A549 (cell line): ENCODE measurements at regions of chr1 and their contacts with region 1.

Region 1: DNA sequence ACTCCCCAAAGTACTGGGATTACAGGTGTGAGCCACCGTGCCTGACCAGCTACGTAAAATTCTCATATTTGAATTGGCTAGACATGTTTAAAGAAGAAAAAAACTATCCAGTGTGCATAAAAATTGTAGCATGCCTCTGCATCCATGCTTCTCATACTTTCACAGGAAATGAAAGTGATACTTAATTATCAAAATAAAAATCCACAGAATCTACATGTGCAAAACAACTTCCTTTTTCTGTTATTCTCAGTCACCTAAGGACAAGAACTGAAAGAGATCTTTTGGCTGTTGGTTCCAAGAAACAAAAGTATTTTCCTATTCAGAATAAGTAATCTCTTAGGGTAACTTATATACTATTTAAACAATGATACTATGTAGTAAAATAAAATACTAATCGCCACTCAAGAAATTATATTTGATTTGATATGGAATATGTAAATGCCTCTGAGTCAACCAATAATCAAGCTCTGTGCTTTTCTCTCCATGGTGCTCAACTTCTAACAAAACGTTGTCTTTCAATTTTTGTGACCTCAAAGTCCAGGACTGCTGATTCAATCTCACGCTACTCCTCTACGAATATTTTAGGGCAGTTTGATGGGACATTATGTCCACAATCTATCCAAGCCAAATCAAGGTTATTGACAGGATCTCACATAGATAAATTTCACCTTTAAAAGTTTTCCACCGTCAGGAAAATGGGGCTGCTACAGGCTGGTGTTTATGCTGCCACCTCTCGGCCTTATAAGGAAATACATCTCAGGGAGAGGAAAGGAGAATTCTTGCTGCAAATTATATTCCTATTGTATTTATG is 102.7 kb downstream of the ZNF281 start:
- DNase-seq: peak; percentile 47 to 76
- ATAC-seq: no peak
- H3K4me3 ChIP-seq: no peak overlapping the region
- H3K27ac ChIP-seq: peak overlapping the region; percentile 16 to 45; a peak in 1 of 6 replicates
- H3K4me1 ChIP-seq: peaks cover 8% of the 10 kb centered on the region; the same call in 1 of the 3 replicates
- CTCF ChIP-seq: peak; percentile 83
- EP300 ChIP-seq: no peak
- POLR2A ChIP-seq: no peak
- RAD21 ChIP-seq: peak; percentile 67 to 74; a peak in 4 of 5 replicates

Region 2: GRCh38 chr1:200296091-200296661 is 11.0 kb before region 1 on chr1:
- CTCF ChIA-PET with region 1: interaction called, 20 read pairs
- POLR2A ChIA-PET with region 1: no interaction called
- DNase-seq: peak in 1 of 2 experiments; percentile 32
- ATAC-seq: peak in 1 of 2 experiments; percentile 74; a peak in 3 of 6 replicates
- H3K4me3 ChIP-seq: no peak overlapping the region
- H3K27ac ChIP-seq: peak overlapping the region in 1 of 2 experiments; percentile 15; a peak in 1 of 6 replicates
- H3K4me1 ChIP-seq: peaks cover 10% of the 10 kb centered on the region
- CTCF ChIP-seq: no peak
- EP300 ChIP-seq: no peak
- POLR2A ChIP-seq: no peak
- RAD21 ChIP-seq: no peak

Region 3: DNA sequence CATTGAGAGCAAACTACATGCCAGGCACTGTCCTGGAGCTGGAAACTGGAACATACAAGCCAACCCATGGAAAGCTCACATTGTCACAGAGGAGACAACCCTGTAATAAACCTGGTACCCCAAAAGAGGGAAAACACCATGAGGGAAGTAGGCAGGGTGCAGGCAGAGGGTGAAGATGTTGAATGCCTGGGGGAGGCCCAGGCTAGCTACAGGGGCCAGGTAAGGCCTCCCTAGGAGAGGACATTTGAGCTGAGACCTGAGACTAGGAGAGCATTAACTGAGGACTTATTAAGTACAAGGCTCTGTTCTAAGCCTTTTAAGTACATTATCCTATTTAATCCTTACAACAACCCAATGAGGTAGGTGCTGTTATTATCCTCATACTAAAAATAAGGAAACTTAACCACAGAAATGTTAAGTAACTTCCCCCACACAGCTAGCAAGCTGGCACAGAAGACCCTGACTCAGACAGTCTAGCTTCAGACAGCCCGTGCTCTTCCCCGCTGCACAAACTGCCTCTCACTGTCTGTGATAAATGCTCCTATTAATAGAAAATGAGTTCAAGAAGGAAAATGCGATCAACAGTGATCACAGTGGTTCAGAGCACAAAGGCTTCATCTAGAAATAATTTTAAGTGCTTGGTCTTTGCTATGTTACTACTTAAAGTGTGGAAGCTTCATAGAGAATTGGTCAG is 60.8 kb after region 1 on chr1:
- CTCF ChIA-PET with region 1: interaction called, 11 read pairs
- POLR2A ChIA-PET with region 1: no interaction called
- DNase-seq: no peak
- ATAC-seq: no peak
- H3K4me3 ChIP-seq: no peak overlapping the region
- H3K27ac ChIP-seq: peak overlapping the region; percentile 88 to 95
- H3K4me1 ChIP-seq: peaks cover 96% of the 10 kb centered on the region
- CTCF ChIP-seq: no peak
- EP300 ChIP-seq: no peak
- POLR2A ChIP-seq: no peak
- RAD21 ChIP-seq: no peak

Region 4: GRCh38 chr1:200610846-200611245 is 303.7 kb after region 1 on chr1:
- CTCF ChIA-PET with region 1: no interaction called
- POLR2A ChIA-PET with region 1: no interaction called
- DNase-seq: no peak
- ATAC-seq: no peak; a peak in 1 of 6 replicates
- H3K4me3 ChIP-seq: no peak overlapping the region
- H3K27ac ChIP-seq: no peak overlapping the region
- H3K4me1 ChIP-seq: no peaks in the 10 kb centered on the region
- CTCF ChIP-seq: no peak
- EP300 ChIP-seq: no peak
- POLR2A ChIP-seq: no peak
- RAD21 ChIP-seq: no peak